CD8-positive, alpha-beta T cell (primary cell): ENCODE measurements at regions of chr6 and their contacts with region 1.

Region 1: DNA sequence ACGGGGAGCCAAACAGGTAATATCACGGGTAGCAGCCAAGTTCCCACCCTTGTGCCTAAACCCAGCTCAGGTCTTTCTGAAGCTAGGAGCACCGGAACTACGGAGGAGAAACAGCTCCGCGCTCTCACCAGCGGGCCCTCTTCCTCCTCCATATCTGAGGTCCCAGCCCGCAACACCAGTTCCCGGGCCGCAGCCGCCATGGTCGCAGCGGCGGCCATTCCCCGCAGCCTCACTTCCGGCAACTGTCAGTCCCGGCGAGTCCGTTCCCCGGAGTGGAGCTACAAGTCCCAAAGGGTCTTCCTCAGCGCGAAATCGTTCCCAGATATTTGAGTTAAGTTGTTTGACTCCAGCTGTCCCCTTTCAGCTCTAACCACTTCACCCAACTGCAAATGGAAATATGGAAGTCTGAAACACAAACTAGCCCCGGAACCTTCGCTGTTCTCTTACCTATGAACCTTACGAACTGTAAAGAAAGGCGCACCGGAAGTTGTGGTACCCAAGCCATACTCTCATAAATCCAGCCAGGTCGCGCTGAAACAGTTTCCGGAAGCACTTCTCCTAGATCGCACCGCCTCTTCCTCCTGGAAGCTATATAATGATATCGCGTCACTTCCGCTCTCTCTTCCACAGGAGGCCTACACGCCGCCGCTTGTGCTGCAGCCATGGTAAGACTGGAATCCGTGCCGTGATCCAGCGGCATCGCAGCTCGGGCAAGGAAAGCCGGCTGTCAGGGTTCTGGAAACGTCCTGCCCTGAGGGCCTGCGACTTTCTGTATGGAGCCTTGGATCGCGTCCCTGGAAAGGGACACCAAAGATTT is at the starts of genes RPS18 and VPS52:
- DNase-seq: peak; percentile 82 to 99 (median 90)
- ATAC-seq: peak; percentile 85
- H3K4me3 ChIP-seq: peak within 1 kb of the TSS; percentile 74 to 82
- H3K4me3 Mint-ChIP-seq: peak within 1 kb of the TSS; percentile 100
- H3K27ac ChIP-seq: peak within 1 kb of the TSS; percentile 87 to 95
- H3K27ac Mint-ChIP-seq: peak within 1 kb of the TSS; percentile 100
- H3K4me1 ChIP-seq: peaks cover 44% of the 10 kb centered on the region
- H3K4me1 Mint-ChIP-seq: peaks cover 62% of the 10 kb centered on the region
- H3K27me3 ChIP-seq: no peaks in the 10 kb centered on the region
- H3K27me3 Mint-ChIP-seq: no peaks in the 10 kb centered on the region
- CTCF ChIP-seq: no peak
- total RNA-seq, gene RPS18: 4,154 to 4,290 TPM
- total RNA-seq, gene VPS52: 72.2 to 75.9 TPM

Region 2: DNA sequence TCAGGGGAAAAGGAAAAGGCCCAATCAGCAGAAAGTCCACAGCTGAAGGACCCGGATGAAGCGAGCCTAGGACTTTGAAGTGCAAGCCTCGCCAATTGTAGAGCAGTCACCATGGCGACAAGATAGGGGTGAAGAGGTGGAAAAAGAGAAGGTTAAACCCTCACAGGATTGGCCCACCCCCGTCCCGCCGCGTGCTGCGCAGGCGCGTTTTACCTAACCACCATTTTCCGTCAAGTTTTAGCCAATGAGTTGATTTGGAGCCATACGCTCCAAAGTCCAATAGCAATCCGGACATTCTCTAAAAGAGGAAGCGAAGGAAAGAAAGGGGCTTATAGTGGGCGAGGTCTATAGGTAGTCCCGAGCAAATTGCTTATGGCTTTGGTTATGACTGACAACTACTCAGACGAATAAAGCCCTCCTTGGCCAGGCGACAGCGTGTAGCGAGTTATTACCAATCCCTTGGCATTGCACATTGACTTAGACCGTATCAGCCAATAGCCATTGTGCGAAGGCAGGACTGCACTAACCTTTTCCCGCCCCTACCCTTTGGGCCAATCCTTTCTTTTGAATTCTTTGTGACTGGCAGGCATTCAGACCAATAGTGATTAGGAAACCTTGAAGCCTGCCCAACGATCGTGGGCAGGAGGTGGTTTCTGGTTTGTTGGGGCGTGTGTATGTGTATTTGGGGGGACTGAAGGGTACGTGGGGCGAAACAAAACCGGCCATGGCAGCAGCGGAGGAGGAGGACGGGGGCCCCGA is 1093.7 kb before region 1 on chr6 and contains the start of gene RNF5:
- CTCF ChIA-PET with region 1: no interaction called
- POLR2A ChIA-PET with region 1: no interaction called
- intact Hi-C with region 1: loop called in 1 of 2 experiments (anchors 10 kb)
- DNase-seq: peak; percentile 84 to 100 (median 93)
- ATAC-seq: peak; percentile 83
- H3K4me3 ChIP-seq: peak within 1 kb of the TSS; percentile 72 to 82
- H3K4me3 Mint-ChIP-seq: peak within 1 kb of the TSS; percentile 93
- H3K27ac ChIP-seq: peak within 1 kb of the TSS; percentile 89 to 98
- H3K27ac Mint-ChIP-seq: peak within 1 kb of the TSS; percentile 96
- H3K4me1 ChIP-seq: peaks cover 59% of the 10 kb centered on the region
- H3K4me1 Mint-ChIP-seq: peaks cover 69% of the 10 kb centered on the region
- H3K27me3 ChIP-seq: no peaks in the 10 kb centered on the region
- H3K27me3 Mint-ChIP-seq: no peaks in the 10 kb centered on the region
- CTCF ChIP-seq: no peak
- total RNA-seq, gene RNF5: 10.0 to 11.5 TPM

Region 3: GRCh38 chr6:32829495-32829894 is 442.2 kb before region 1 on chr6:
- CTCF ChIA-PET with region 1: no interaction called
- POLR2A ChIA-PET with region 1: no interaction called
- intact Hi-C with region 1: no loop called
- DNase-seq: no peak
- ATAC-seq: no peak
- H3K4me3 ChIP-seq: no peak overlapping the region
- H3K4me3 Mint-ChIP-seq: no peak overlapping the region
- H3K27ac ChIP-seq: no peak overlapping the region
- H3K27ac Mint-ChIP-seq: no peak overlapping the region
- H3K4me1 ChIP-seq: no peaks in the 10 kb centered on the region
- H3K4me1 Mint-ChIP-seq: peaks cover 25% of the 10 kb centered on the region
- H3K27me3 ChIP-seq: no peaks in the 10 kb centered on the region
- H3K27me3 Mint-ChIP-seq: no peaks in the 10 kb centered on the region
- CTCF ChIP-seq: no peak

Region 4: DNA sequence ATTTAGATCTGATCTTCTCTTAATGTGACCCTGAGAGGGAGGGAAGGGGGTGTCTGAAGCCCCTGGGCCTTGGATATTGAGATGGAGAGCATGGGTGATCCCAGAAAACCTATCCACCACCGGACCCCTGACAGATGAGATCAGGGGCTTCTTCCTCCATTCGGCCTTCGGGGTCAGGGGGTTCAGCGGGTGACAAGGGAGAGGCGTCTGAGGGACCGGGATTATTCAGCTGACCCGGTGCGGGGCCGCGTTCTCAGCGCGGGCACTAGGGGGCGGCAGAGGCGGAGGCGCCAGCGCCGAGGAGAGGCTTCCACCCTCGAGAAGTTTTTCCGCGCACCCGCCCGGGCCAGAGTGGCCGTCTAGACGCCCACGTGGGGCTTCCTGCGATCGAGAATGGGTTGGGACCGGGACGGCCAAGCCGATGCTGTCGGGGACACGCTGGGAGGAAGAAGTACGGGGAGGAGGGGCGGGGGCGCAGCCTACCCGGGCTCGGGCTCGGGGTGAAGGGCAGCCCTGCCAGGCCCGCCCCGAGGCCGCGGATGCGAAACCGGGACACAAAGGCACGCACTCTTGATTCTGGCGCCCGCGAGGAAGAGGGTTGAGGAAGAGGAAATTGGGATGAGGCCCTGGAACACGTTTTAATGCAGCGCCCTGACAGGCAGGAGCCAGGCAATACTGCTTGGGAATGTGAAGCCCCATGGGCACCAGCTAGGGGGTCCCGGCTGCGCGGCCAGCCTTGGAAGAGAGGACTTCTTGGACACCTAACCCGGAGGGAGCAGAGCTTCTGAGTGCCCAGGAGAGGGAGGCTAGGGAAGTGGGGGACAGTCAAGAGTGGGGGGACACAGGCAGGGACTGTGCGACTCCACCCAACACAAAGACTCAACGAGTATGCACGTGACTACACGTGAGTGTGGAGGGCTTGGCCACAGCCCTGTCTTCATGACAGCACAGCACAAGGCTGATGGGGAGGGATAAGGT is 110.0 kb before region 1 on chr6:
- CTCF ChIA-PET with region 1: no interaction called
- POLR2A ChIA-PET with region 1: no interaction called
- intact Hi-C with region 1: no loop called
- DNase-seq: peak; percentile 74 to 91 (median 85)
- ATAC-seq: peak; percentile 97
- H3K4me3 ChIP-seq: peak overlapping the region; percentile 50
- H3K4me3 Mint-ChIP-seq: peak overlapping the region; percentile 86
- H3K27ac ChIP-seq: no peak overlapping the region
- H3K27ac Mint-ChIP-seq: no peak overlapping the region
- H3K4me1 ChIP-seq: peaks cover 8% of the 10 kb centered on the region
- H3K4me1 Mint-ChIP-seq: peaks cover 14% of the 10 kb centered on the region
- H3K27me3 ChIP-seq: no peaks in the 10 kb centered on the region
- H3K27me3 Mint-ChIP-seq: peaks cover 4% of the 10 kb centered on the region
- CTCF ChIP-seq: peak; percentile 92

Region 5: DNA sequence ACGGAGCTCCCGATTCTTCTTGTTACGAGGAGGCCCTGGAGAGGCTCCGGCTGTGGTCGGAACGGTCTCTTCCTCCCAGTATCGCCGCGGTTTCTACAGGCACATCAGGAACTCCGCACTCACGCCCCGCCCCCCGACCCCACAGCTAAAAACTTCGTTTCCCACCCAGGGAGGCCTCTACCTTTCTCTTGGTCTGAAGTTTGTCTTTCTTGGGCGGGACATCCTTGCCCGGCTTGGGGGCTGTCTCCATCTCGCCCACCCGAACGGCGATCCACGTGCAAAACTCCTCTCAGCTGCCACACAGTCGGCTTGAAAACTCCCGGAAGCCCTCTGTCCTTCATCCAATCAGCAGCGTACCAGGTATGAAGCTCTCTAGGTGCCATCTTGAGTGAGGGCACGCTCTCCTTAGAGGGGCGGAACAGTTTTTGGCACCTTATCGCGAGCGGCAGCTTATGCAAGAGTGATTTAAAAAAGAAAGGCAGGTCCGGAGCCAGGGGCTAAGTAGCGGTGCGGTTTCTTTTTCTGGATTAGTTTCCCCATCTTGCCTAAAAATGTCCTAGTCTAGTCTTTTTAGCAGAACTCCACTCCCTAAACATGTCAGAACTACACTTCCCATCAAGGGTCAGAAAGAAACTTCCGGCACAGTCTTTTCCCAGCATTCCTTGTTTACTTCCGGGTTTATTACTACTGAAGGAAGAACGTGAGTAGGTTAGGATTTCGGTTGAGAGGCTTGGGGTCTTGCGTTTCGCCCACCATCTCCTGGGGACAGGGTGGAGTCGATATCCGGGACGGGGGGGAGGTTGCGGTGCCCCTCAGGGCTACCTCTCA is 17.5 kb after region 1 on chr6 and contains the starts of genes PFDN6 and WDR46:
- CTCF ChIA-PET with region 1: interaction called, 34 read pairs
- POLR2A ChIA-PET with region 1: interaction called, 46 read pairs
- intact Hi-C with region 1: loop called (anchors 1 kb)
- DNase-seq: peak; percentile 64 to 94 (median 84)
- ATAC-seq: peak; percentile 96
- H3K4me3 ChIP-seq: peak within 1 kb of the TSS; percentile 81 to 98
- H3K4me3 Mint-ChIP-seq: peak within 1 kb of the TSS; percentile 99
- H3K27ac ChIP-seq: peak within 1 kb of the TSS; percentile 59 to 82
- H3K27ac Mint-ChIP-seq: peak within 1 kb of the TSS; percentile 88
- H3K4me1 ChIP-seq: peaks cover 25% of the 10 kb centered on the region
- H3K4me1 Mint-ChIP-seq: peaks cover 41% of the 10 kb centered on the region
- H3K27me3 ChIP-seq: no peaks in the 10 kb centered on the region
- H3K27me3 Mint-ChIP-seq: no peaks in the 10 kb centered on the region
- CTCF ChIP-seq: no peak
- total RNA-seq, gene PFDN6: 9.4 to 11.2 TPM
- total RNA-seq, gene WDR46: 19.9 to 22.1 TPM

Region 6: GRCh38 chr6:33323623-33323948 is 51.9 kb after region 1 on chr6:
- CTCF ChIA-PET with region 1: no interaction called
- POLR2A ChIA-PET with region 1: interaction called, 11 read pairs
- intact Hi-C with region 1: loop called (anchors 1 kb)
- DNase-seq: peak in 1 of 9 experiments; percentile 29
- ATAC-seq: no peak
- H3K4me3 ChIP-seq: peak overlapping the region; percentile 85 to 93
- H3K4me3 Mint-ChIP-seq: peak overlapping the region; percentile 96
- H3K27ac ChIP-seq: peak overlapping the region; percentile 83 to 91
- H3K27ac Mint-ChIP-seq: peak overlapping the region; percentile 94
- H3K4me1 ChIP-seq: peaks cover 43% of the 10 kb centered on the region
- H3K4me1 Mint-ChIP-seq: peaks cover 53% of the 10 kb centered on the region
- H3K27me3 ChIP-seq: no peaks in the 10 kb centered on the region
- H3K27me3 Mint-ChIP-seq: no peaks in the 10 kb centered on the region
- CTCF ChIP-seq: no peak

Region 7: DNA sequence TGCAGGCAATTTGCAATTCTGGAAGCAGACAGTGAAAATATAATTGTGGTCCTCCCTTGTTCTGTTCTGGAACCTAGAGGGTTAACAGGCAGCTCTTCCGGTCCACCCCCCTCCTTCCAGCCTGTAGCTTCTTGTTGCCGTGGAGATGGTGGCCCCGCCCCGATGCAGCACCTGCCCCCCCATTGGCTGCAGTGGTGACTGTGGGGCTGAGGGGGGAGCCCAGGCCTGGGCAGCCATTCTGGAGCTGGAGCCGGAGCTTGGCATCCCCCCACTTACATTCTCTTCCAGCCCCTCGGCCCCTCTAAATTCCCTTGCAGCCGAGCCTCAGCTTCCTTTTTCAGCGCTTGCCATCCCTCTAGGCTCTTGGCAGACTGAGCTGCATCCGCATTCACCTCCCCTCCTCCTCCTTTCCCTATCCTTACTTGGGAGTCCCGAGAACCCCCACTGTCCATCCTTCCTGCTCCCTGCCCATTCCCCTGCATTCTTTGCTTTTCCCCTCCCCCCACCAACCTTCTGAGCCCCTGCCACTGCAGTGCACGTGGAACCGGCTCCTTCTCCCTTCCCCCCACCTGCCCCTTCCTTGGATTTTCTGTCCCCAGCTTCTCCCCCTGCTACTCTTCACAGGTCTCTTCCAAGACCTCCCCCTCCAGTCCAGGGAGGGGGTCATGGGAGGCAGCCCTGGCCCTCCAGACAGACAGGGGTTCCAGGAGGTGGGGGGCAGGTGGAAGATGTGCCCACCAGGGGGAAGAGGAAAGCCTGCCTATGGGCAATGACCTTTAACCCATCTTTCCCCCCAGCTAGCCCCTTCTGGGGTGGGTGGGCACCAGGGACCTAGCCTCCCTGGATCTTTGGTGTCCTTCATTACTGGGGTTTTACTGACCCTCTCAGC is 159.6 kb after region 1 on chr6:
- CTCF ChIA-PET with region 1: no interaction called
- POLR2A ChIA-PET with region 1: interaction called, 17 read pairs
- intact Hi-C with region 1: loop called in 1 of 2 experiments (anchors 5 kb)
- DNase-seq: peak; percentile 77 to 93 (median 88)
- ATAC-seq: peak; percentile 59
- H3K4me3 ChIP-seq: peak overlapping the region; percentile 38 to 53
- H3K4me3 Mint-ChIP-seq: peak overlapping the region; percentile 93
- H3K27ac ChIP-seq: peak overlapping the region; percentile 53 to 81
- H3K27ac Mint-ChIP-seq: peak overlapping the region; percentile 94
- H3K4me1 ChIP-seq: peaks cover 56% of the 10 kb centered on the region
- H3K4me1 Mint-ChIP-seq: peaks cover 64% of the 10 kb centered on the region
- H3K27me3 ChIP-seq: no peaks in the 10 kb centered on the region
- H3K27me3 Mint-ChIP-seq: no peaks in the 10 kb centered on the region
- CTCF ChIP-seq: no peak

Region 8: DNA sequence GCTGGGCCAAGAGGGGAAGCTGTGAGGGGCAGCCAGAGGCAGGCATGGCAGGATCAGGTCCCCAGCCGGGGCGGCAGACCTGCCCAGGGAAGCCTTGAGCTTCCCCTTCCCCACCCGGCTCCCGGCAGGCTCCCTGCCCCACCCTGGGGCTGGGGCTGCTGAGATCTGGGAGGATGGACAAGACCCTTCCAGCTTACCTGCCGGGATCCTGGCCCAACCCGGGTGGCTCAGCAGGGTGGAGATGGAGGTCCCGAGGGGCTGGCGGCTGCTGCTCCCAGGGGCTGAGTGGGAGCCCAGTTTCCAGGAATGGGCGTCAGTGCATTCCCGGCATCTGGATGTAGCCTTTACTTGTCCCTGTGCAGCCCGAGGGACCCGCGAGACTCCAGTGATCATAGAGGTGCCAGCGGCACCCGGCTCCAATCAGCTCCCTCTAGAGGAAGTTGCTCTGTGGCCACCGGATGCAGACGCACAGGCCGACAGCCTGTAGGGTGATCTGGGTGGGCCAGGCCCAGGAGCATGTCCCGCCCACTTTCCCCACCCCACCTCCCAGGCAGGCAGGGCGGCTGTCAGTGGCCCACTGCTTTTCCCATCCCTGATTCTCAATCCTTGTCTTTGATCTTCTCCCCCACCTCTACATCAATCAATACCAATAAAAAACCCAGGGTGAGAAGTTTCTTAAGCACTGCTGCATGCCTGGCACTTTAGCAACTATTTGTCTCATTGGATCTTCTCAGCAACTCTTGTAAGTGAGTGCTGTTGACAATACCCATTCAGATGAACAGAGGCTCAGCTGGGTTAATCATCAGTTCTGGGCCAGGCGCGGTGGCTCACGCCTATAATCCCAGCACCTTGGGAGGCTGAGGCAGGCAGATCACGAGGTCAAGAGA is 308.4 kb after region 1 on chr6 and contains the start of gene BAK1:
- CTCF ChIA-PET with region 1: no interaction called
- POLR2A ChIA-PET with region 1: no interaction called
- intact Hi-C with region 1: loop called in 1 of 2 experiments (anchors 5 kb)
- DNase-seq: peak; percentile 59 to 94 (median 85)
- ATAC-seq: peak; percentile 94
- H3K4me3 ChIP-seq: peak within 1 kb of the TSS; percentile 97 to 98
- H3K4me3 Mint-ChIP-seq: peak within 1 kb of the TSS; percentile 93
- H3K27ac ChIP-seq: peak within 1 kb of the TSS; percentile 85 to 87
- H3K27ac Mint-ChIP-seq: peak within 1 kb of the TSS; percentile 98
- H3K4me1 ChIP-seq: peaks cover 29% of the 10 kb centered on the region
- H3K4me1 Mint-ChIP-seq: peaks cover 31% of the 10 kb centered on the region
- H3K27me3 ChIP-seq: no peaks in the 10 kb centered on the region
- H3K27me3 Mint-ChIP-seq: no peaks in the 10 kb centered on the region
- CTCF ChIP-seq: peak; percentile 44
- total RNA-seq, gene BAK1: 44.8 to 46.5 TPM

Region 9: DNA sequence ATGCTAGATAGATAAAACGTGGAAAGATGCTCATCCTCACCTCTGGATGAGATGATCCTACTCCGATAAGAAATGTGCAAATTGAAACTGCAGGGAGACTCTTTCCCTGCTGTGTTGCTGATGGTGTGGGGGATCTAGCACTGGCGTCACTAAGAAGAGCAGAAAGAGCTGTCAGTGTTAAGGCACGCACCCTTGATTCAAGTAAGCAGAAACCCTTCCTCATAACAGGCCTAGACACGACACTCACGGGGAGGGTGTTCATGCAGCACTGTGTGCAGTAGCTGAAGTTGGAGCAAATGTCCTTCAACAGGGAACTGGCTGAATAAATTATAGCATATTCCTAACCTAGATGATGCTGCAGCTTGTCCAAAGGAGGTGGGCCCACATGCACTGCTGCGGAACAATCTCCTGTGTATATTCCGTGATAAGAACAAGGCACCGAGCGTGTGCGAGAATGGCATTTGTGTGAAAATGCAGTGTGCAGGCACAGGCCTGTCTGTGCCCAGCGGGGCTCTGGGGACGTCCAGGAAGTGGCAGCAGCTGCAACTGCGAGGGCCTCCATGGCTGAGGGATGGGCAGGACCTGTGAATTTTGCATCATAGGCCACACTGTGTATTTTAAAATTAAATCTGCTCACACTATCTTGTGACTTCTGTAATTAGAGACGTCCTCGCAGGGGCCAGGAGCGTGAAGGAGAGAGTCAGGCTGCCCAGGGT is 1805.5 kb after region 1 on chr6:
- CTCF ChIA-PET with region 1: no interaction called
- POLR2A ChIA-PET with region 1: no interaction called
- intact Hi-C with region 1: no loop called
- DNase-seq: no peak
- ATAC-seq: no peak
- H3K4me3 ChIP-seq: no peak overlapping the region
- H3K4me3 Mint-ChIP-seq: no peak overlapping the region
- H3K27ac ChIP-seq: no peak overlapping the region
- H3K27ac Mint-ChIP-seq: no peak overlapping the region
- H3K4me1 ChIP-seq: no peaks in the 10 kb centered on the region
- H3K4me1 Mint-ChIP-seq: no peaks in the 10 kb centered on the region
- H3K27me3 ChIP-seq: no peaks in the 10 kb centered on the region
- H3K27me3 Mint-ChIP-seq: no peaks in the 10 kb centered on the region
- CTCF ChIP-seq: no peak